Endothelial cell of umbilical vein (primary cell): ENCODE measurements at regions of chr2 and their contacts with region 1.

Region 1: DNA sequence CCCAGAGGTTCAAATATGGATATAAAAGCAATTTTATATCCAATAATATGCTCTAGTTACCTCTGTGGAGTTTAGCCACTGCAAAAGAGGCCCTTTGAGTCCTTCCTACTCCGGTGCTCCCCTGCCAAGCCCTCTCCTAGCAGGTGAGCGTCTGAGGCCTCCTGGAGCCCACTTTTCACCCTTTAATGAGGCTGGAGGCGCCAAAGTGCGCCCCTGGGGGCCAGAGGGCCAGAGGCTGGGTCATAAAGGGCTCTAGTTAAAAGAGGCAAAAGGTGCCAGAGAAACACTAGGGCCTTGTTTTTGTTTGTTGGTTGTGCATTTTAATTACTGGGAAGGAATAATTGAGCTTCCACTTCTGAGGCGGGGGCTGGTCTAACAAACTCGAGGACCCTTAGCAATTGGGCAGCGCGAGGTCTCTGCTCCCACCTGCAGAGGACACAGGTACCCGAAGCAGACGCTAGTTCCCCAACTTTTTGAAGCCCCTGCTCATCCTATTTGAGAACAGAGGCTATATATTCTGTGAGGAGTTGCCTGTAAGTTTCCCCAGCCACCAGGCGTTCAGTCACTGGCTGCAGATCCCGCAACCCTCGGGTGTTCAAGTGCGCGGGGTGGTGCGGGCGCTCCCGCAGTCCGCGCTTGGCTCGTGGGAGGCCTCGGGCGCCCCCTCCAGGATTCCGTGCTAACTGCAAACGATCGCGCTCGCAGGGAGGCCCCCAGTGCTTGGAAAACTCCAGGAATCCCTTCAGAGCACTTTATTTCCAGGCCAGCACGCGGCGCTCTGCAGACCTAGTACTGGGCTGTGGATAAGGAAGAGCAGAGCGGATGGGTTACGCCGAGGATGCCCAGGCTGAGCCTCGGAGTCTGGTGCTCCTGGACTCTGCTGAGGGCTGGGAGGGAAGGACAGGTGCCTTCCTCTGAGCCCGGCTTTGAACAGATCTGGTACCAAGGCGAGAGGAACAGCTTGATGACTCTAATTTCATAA is 14.1 kb downstream of the MSGN1 start:
- DNase-seq: peak; percentile 89
- H3K4me3 ChIP-seq: no peak overlapping the region
- H3K27ac ChIP-seq: no peak overlapping the region
- H3K4me1 ChIP-seq: no peaks in the 10 kb centered on the region
- H3K27me3 ChIP-seq: peaks cover 8 to 30% of the 10 kb centered on the region in 2 experiments
- CTCF ChIP-seq: peak; percentile 95 to 98
- POLR2A ChIP-seq: no peak

Region 2: GRCh38 chr2:17470855-17471641 is 359.3 kb before region 1 on chr2:
- CTCF ChIA-PET with region 1: no interaction called
- POLR2A ChIA-PET with region 1: no interaction called
- dilution Hi-C with region 1: no loop called
- intact Hi-C with region 1: loop called (anchors 5 kb)
- DNase-seq: peak; percentile 6
- H3K4me3 ChIP-seq: no peak overlapping the region
- H3K27ac ChIP-seq: no peak overlapping the region
- H3K4me1 ChIP-seq: no peaks in the 10 kb centered on the region
- H3K27me3 ChIP-seq: no peaks in the 10 kb centered on the region
- CTCF ChIP-seq: peak in 1 of 2 donors; percentile 11
- POLR2A ChIP-seq: no peak

Region 3: DNA sequence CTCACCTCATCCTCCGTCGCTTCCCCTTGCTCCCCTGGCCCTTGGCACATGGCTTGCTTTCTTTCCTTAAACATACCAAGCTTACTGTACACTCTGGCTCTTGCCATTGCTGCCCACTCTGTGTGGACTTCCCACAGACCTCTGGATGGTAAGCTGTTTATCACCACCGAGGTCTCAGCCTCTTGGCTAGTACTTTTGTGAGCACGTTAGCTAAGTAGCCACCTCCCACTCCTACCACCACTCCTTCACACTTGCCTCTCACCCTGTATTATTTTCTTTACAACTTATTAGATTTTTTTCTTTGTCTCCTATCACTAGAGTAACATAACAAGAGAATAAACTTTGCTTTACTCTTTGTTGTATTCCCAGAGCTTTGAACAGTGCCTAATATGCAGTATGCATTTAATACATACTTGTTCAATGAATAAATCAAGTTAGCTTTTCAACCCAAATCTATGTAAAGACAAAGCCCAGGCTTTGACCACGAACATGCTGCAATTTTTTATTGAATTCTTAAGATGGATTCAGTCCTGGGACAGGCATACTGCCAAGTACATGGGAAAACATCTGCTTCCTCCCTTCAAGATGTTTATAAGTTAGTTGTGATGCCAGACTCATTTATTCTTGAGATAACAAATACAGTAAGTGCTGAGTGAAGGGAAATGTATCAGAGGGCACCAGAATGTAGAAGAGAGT is 39.1 kb before region 1 on chr2:
- CTCF ChIA-PET with region 1: interaction called, 3 read pairs
- POLR2A ChIA-PET with region 1: no interaction called
- dilution Hi-C with region 1: no loop called
- intact Hi-C with region 1: loop called (anchors 1 kb)
- DNase-seq: peak; percentile 97
- H3K4me3 ChIP-seq: no peak overlapping the region
- H3K27ac ChIP-seq: no peak overlapping the region
- H3K4me1 ChIP-seq: no peaks in the 10 kb centered on the region
- H3K27me3 ChIP-seq: peaks cover 3 to 10% of the 10 kb centered on the region in 2 experiments
- CTCF ChIP-seq: no peak
- POLR2A ChIP-seq: no peak